Astrocyte of the cerebellum (primary cell): ENCODE measurements at regions of chr1 and their contacts with region 1.

Region 1: GRCh38 chr1:20158358-20159067 is 19.4 kb downstream of the PLA2G2F start:
- DNase-seq: no peak
- H3K4me3 ChIP-seq: no peak overlapping the region
- CTCF ChIP-seq: no peak

Region 2: DNA sequence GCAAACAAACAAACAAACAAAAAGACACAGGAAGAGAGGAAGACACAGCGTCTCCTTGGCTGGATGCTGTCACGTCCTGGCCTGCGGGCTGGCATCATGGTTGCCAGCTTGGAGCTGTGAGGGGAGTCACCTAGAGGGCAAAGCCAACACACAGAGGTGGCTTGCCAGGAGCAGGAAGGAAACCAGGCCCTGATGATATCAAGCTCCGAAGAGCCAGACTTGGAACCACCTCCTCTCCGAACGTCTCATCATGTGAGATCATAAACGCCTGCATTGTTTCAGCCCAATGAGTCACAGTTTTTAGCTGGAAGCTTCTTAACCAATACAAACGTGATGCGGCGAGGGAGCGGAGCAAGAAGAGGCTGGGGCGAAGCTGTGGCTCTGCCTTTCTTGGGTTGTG is 47.8 kb before region 1 on chr1:
- in situ Hi-C with region 1: loop called (anchors 5 kb)
- DNase-seq: no peak
- H3K4me3 ChIP-seq: no peak overlapping the region
- CTCF ChIP-seq: no peak